ENCODE measurements at regions of chr3 and their contacts with region 1.

Region 1: GRCh38 chr3:9384141-9384853 is 13.1 kb upstream of the SETD5 start:
- DNase-seq: no peak
- ATAC-seq: no peak
- H3K4me3 ChIP-seq: no peak overlapping the region
- H3K4me3 Mint-ChIP-seq: no peak overlapping the region
- H3K27ac ChIP-seq: no peak overlapping the region
- H3K27ac Mint-ChIP-seq: peak overlapping the region; percentile 37
- H3K4me1 ChIP-seq: peaks cover 4% of the 10 kb centered on the region
- H3K4me1 Mint-ChIP-seq: peaks cover 34% of the 10 kb centered on the region
- H3K27me3 ChIP-seq: no peaks in the 10 kb centered on the region
- H3K27me3 Mint-ChIP-seq: no peaks in the 10 kb centered on the region
- CTCF ChIP-seq: no peak

Region 2: DNA sequence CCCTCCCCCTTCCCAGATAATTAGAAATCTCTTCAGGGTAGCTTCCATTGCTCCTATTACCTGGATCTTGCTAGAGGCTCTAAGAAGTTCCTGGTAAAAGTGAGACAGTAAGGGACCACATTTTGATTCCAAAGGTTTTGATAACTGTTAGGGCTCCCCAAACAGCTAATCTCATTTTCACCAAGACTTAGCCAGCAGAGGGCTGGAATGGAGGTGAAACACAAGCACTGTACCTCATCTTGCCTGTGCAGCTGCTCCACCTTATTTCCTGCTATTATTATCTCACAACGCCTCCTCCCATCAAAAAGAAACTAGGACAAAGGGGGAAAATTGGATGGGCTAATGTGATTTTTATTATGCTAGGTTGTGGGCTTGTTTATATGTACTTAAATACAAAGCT is 20.4 kb after region 1 on chr3:
- CTCF ChIA-PET with region 1: interaction called, 3 read pairs
- POLR2A ChIA-PET with region 1: interaction called, 4 read pairs
- intact Hi-C with region 1: loop called in 1 of 2 experiments (anchors 1 kb)
- DNase-seq: peak in 3 of 9 experiments; percentile 16 to 51 (median 32)
- ATAC-seq: peak; percentile 77
- H3K4me3 ChIP-seq: no peak overlapping the region
- H3K4me3 Mint-ChIP-seq: peak overlapping the region; percentile 20
- H3K27ac ChIP-seq: no peak overlapping the region
- H3K27ac Mint-ChIP-seq: peak overlapping the region; percentile 82
- H3K4me1 ChIP-seq: peaks cover 70% of the 10 kb centered on the region
- H3K4me1 Mint-ChIP-seq: peaks cover 85% of the 10 kb centered on the region
- H3K27me3 ChIP-seq: no peaks in the 10 kb centered on the region
- H3K27me3 Mint-ChIP-seq: no peaks in the 10 kb centered on the region
- CTCF ChIP-seq: no peak

Region 3: GRCh38 chr3:9422712-9423424 is 38.6 kb after region 1 on chr3:
- CTCF ChIA-PET with region 1: no interaction called
- POLR2A ChIA-PET with region 1: no interaction called
- intact Hi-C with region 1: loop called (anchors 5 kb)
- DNase-seq: peak in 2 of 9 experiments; percentile 53 to 67
- ATAC-seq: peak; percentile 93
- H3K4me3 ChIP-seq: no peak overlapping the region
- H3K4me3 Mint-ChIP-seq: no peak overlapping the region
- H3K27ac ChIP-seq: peak overlapping the region in 1 of 2 experiments; percentile 38
- H3K27ac Mint-ChIP-seq: peak overlapping the region; percentile 86
- H3K4me1 ChIP-seq: peaks cover 6% of the 10 kb centered on the region
- H3K4me1 Mint-ChIP-seq: peaks cover 54% of the 10 kb centered on the region
- H3K27me3 ChIP-seq: no peaks in the 10 kb centered on the region
- H3K27me3 Mint-ChIP-seq: no peaks in the 10 kb centered on the region
- CTCF ChIP-seq: peak; percentile 73

Measured in CD8-positive, alpha-beta T cell (primary cell).